Left ventricle myocardium superior (tissue), 1 donor: ENCODE measurements at regions of chr10 and their contacts with region 1.

Region 1: GRCh38 chr10:73017955-73018480 is 63.4 kb upstream of the PLA2G12B start:
- DNase-seq: peak; percentile 55
- ATAC-seq: peak; percentile 82

Region 2: GRCh38 chr10:72702868-72703581 is 315.0 kb before region 1 on chr10:
- intact Hi-C with region 1: no loop called
- DNase-seq: no peak
- ATAC-seq: peak; percentile 40

Region 3: DNA sequence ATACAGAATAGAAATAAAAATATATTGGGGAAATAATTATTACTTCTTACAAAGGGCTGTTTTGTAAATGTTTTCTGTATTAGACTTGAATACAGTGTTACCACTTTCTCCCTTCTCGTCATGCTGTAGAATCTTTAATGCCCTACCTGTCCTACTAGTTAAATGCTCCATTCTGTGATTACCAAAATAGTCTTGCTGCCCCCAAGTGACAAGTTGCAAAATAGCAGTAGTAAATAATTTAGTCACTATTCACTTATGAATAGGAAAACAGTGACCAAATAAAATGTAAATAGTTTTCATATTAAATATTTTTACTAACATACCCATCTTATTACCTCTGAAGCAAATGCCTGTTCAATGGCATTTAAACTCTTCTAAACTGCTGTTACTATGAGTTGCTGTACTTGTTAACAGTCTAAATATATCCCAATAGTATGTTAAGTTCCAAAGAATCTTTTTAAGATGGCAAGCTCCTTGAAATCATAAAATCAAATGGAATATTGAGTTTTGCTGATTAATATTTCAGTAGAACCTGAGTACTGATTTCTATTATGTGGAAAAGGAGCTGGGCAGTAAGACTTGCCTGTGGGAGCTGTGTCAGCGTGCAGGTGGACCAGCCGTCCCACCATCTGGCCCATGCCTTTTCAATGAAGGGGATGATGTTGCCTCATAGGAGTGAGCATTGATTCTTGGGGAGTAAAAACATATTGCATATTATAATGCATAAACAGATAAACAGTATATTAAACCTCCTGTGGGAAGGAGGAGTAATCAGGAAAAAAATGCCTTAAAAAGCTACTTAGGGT is 142.6 kb before region 1 on chr10:
- intact Hi-C with region 1: no loop called
- DNase-seq: no peak
- ATAC-seq: no peak

Region 4: GRCh38 chr10:73060738-73061635 is 43.0 kb after region 1 on chr10:
- intact Hi-C with region 1: loop called (anchors 10 kb)
- DNase-seq: no peak
- ATAC-seq: peak; percentile 55